Pancreas (tissue), 10 donors: ENCODE measurements at regions of chr11 and their contacts with region 1.

Region 1: DNA sequence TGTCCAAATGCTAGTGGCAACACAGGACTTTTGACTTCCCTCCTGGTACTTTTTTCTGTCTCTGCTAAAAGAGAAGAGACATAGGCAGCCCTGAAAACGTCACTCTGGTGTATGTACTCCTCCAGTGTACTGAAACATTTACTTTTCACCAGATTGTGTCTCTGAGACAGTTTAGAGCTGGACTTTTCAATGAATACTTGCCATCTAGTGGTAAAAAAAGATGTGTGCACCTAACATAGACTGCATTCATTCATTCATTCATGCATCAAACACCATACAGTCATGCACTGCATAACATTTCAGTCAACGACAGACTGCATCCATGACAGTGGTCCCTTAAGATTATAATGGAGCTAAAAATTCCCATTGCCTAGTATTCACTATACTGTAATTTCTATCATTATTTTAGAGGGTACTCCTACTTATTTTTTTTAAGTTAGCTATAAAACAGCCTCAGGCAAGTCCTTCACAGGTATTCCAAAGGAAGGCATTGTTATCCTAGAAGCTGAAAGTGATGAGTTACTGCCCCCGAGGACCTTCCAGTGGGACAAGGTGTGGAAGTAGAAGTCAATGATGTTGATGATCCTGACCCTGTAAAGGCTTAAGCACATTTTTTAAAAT is 186.2 kb downstream of the SPON1 start:
- DNase-seq: no peak
- ATAC-seq: peak in 3 of 4 donors; percentile 64 to 75 (median 64)
- H3K4me3 ChIP-seq: no peak overlapping the region
- H3K27ac ChIP-seq: no peak overlapping the region
- H3K4me1 ChIP-seq: no peaks in the 10 kb centered on the region
- H3K27me3 ChIP-seq: no peaks in the 10 kb centered on the region
- CTCF ChIP-seq: peak in 1 of 4 donors; percentile 17

Region 2: GRCh38 chr11:13962562-13963168 is 186.1 kb before region 1 on chr11 and contains the start of gene SPON1:
- intact Hi-C with region 1: loop called in 1 of 3 experiments (anchors 10 kb)
- DNase-seq: peak; percentile 20 to 80 (median 38)
- ATAC-seq: peak; percentile 73 to 86 (median 80)
- H3K4me3 ChIP-seq: peak within 1 kb of the TSS; percentile 5 to 44 (median 22)
- H3K27ac ChIP-seq: no peak within 1 kb of the TSS
- H3K4me1 ChIP-seq: peaks cover 0 to 3% (median 0%) of the 10 kb centered on the region in 3 donors
- H3K27me3 ChIP-seq: peaks cover 0 to 23% (median 2%) of the 10 kb centered on the region in 4 donors
- CTCF ChIP-seq: no peak
- total RNA-seq, gene SPON1: 0.83 to 17.5 (median 4.5) TPM